ENCODE measurements at regions of chr3 and their contacts with region 1.

Region 1: DNA sequence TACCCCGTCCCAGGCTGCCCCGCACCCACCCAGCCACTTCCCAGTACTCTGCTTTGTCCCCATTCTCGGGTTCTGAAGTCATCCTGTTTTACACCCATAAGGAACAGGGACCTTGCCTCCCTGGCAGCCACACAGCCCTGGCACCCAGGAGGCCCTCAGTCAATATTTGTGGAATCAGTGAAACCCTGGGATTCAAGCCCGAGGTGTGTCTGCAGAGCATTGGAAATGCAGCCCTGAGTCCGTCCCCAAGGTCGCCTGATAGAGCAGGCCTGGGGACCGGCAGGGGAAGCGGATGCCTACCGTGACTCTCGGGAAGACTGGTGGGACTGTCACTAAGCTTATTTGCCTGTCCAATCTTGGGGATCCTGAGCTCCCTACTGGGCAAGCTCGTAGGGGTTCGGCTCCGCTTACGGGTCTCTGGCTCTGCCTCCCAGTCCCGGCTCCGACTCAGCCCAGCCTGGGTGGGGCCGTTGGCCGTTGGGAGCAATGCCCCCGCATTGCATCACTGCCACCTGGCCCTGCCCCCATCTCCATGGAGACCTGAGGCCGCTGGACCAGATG is 64.4 kb upstream of the TAMM41 start:
- DNase-seq: peak; percentile 12
- H3K4me3 ChIP-seq: no peak overlapping the region
- H3K27ac ChIP-seq: no peak overlapping the region
- H3K4me1 ChIP-seq: no peaks in the 10 kb centered on the region
- H3K27me3 ChIP-seq: no peaks in the 10 kb centered on the region

Region 2: DNA sequence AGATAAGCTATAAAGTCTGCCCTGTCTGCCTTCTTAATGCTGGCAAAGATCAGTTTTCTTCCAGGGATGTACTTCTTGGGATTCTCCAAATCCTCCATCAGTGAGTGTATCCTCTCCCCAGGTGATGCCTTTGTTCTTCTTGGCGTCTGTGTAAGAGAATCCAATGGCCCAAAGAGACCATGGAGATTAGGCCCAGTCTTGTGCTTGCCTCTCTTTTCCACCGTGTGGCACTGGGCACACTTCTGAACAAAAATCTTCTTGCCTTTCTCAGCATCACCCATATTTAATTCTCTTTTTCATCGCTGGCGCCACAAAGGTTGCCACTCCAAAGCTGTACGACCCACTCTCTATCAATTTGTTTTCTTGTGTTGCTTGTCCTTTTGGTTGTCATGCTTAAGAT is 32.2 kb before region 1 on chr3:
- in situ Hi-C with region 1: no loop called
- DNase-seq: no peak
- H3K4me3 ChIP-seq: no peak overlapping the region
- H3K27ac ChIP-seq: no peak overlapping the region
- H3K4me1 ChIP-seq: no peaks in the 10 kb centered on the region
- H3K27me3 ChIP-seq: no peaks in the 10 kb centered on the region

Region 3: DNA sequence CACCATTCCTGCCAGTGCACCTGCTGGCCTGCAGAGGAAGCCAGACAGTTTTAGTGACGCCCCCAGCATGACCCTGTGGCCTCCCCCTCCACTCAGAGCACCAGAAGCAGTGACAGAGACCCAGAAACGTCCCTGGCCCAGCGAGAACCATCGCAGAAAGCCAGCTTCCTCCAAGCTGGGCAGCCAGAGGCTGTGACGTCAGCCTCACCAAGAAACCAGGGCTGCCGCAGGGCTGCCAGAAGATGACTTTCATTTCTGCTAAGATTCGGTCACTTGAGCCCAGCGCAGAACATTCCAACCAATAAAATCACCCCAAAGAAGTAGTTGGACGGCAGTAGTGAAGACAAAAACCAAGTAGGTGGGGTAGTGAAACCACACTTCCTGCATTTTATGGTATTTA is 959.9 kb after region 1 on chr3:
- in situ Hi-C with region 1: loop called (anchors 5 kb)
- DNase-seq: peak; percentile 95
- H3K4me3 ChIP-seq: 0 out of 2 replicates have a peak overlapping the region, but pooled peaks have one; percentile 11
- H3K27ac ChIP-seq: no peak overlapping the region
- H3K4me1 ChIP-seq: peaks cover 4% of the 10 kb centered on the region; the same call in 1 of the 2 replicates
- H3K27me3 ChIP-seq: no peaks in the 10 kb centered on the region; the same call in 1 of the 2 replicates

Measured in GM23248 (cell line).